RWPE1 (cell line): ENCODE measurements at regions of chr3 and their contacts with region 1.

Region 1: DNA sequence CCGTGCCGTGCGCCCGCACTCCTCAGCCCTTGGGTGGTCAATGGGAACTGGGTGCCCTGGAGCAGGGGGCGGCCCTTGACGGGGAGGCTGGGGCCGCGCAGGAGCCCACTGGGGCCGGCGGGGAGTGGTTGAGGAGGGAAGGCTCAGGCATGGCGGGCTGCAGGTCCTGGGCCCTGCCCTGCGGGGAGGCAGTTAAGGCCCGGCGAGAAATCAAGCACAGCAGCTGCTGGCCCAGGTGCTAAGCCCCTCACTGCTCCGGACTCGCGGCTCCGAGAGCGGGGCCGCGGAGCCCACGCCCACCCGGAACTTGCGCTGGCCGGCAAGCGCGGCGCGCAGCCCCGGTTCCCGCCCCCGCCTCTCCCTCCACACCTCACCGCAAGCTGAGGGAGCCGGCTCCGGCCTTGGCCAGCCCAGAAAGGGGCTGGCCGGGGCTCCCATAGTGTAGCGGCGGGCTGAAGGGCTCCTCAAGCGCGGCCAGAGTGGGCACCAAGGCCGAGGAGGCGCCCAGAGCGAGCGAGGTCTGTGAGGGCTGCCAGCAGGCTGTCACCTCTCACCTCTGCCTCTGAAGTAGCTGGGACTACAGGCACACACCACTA is 7.8 kb downstream of the GP9 start:
- DNase-seq: no peak
- H3K27ac ChIP-seq: no peak overlapping the region
- CTCF ChIP-seq: no peak

Region 2: DNA sequence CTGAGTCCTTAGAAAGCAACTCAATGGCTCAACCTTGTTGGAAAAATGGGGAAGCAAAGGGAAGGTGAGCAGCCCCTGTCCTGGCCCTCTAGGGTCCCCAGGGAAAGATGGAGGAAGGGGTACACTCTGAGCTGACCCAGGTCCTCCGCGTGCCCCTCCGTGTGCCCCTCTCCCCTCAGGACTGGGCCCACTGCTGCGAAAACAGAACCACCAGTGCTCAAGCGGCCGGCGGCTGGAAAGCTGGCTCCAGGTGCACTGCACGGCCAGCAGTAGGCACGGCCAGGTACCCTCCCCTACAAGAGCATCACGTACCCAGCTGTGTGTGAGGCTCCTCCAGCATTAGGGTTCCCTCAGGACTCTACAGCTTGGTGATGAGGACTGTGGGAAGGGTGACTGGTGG is 26.9 kb after region 1 on chr3:
- CTCF ChIA-PET with region 1: no interaction called
- POLR2A ChIA-PET with region 1: interaction called, 14 read pairs
- DNase-seq: no peak
- H3K27ac ChIP-seq: no peak overlapping the region
- CTCF ChIP-seq: no peak